Psoas muscle (tissue), 8 donors: ENCODE measurements at regions of chr1 and their contacts with region 1.

Region 1: GRCh38 chr1:224392411-224393249 is 36.0 kb downstream of the CNIH4 start:
- DNase-seq: no peak
- ATAC-seq: no peak
- H3K4me3 ChIP-seq: no peak overlapping the region
- H3K27ac ChIP-seq: no peak overlapping the region
- H3K4me1 ChIP-seq: no peaks in the 10 kb centered on the region
- H3K27me3 ChIP-seq: no peaks in the 10 kb centered on the region
- CTCF ChIP-seq: no peak

Region 2: GRCh38 chr1:224338150-224338838 is 54.3 kb before region 1 on chr1:
- intact Hi-C with region 1: no loop called
- DNase-seq: no peak
- ATAC-seq: no peak
- H3K4me3 ChIP-seq: no peak overlapping the region
- H3K27ac ChIP-seq: no peak overlapping the region
- H3K4me1 ChIP-seq: peaks cover 8% of the 10 kb centered on the region
- H3K27me3 ChIP-seq: peaks cover 0 to 4% (median 3%) of the 10 kb centered on the region in 3 donors
- CTCF ChIP-seq: no peak

Region 3: GRCh38 chr1:224427346-224427745 is 34.7 kb after region 1 on chr1:
- intact Hi-C with region 1: loop called in 1 of 2 experiments (anchors 5 kb)
- DNase-seq: no peak
- ATAC-seq: no peak
- H3K4me3 ChIP-seq: no peak overlapping the region
- H3K27ac ChIP-seq: no peak overlapping the region
- H3K4me1 ChIP-seq: peaks cover 43% of the 10 kb centered on the region
- H3K27me3 ChIP-seq: no peaks in the 10 kb centered on the region
- CTCF ChIP-seq: no peak